Common myeloid progenitor, CD34-positive (primary cell): ENCODE measurements at regions of chr18 and their contacts with region 1.

Region 1: DNA sequence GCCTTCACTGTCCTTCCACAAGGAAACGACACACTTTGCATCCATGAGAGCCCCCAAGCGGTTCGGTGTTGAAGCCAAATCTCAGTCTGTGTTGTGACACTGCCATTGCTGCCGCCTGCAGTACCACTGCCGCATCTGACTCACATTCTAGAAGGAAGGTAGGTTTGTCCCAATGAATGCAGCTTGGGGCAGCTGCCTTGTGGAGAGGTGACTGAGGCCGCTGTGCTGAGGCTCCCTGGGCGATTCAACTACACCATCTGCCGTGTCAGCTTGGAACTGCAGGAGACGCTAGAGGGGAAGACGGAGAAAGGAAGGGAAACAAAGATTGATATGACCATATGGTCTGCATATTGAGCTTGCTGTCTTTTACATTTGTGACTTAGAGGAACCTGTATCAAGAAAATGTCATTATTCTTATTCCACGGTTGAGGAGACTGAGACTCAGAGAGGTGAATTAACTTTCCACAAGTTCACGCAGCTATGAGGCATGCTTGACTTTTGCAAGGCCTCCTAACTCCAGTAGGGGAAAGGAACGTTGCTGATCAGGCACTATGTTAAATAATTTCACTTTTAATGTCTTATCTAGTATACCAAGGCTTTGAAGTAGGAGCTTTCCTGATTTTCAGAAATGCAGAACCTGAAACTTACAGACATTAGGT is 43.5 kb upstream of the LMAN1 start:
- DNase-seq: peak; percentile 84 to 94 (median 93)
- H3K4me3 ChIP-seq: no peak overlapping the region
- H3K27ac ChIP-seq: no peak overlapping the region
- H3K4me1 ChIP-seq: no peaks in the 10 kb centered on the region
- H3K27me3 ChIP-seq: peaks cover 0 to 8% (median 0%) of the 10 kb centered on the region in 5 experiments

Region 2: DNA sequence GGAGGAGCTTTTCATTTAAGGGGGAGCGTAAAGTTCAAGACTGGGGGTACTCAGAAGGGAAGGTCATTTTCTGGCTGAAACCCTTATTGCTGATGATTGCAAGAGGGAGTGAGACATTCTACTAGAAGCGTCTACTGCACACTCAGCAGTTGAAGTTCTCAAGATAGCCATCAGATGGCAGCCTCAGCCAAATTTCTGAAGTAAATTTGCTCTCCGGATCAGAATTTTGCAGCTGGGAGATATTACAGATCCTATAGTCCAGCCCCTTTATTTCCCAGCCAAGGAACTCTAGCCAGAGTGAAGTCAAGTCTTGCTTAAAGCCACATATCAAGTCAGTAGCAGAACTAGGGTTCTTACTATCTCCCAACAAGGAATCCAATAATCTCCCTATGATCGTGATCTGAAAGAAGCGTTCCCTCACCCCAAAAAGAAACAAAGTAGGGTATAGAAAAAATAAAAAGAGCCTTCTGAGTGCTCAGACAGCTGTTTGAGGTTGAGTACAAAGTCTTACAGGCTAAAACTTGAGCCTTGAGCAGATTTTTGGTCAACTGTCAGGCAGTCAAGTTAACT is 153.3 kb before region 1 on chr18:
- CTCF ChIA-PET with region 1: interaction called, 63 read pairs
- POLR2A ChIA-PET with region 1: no interaction called
- DNase-seq: peak; percentile 66 to 80 (median 73)
- H3K4me3 ChIP-seq: no peak overlapping the region
- H3K27ac ChIP-seq: no peak overlapping the region
- H3K4me1 ChIP-seq: no peaks in the 10 kb centered on the region
- H3K27me3 ChIP-seq: peaks cover 9 to 30% (median 17%) of the 10 kb centered on the region in 5 experiments

Region 3: DNA sequence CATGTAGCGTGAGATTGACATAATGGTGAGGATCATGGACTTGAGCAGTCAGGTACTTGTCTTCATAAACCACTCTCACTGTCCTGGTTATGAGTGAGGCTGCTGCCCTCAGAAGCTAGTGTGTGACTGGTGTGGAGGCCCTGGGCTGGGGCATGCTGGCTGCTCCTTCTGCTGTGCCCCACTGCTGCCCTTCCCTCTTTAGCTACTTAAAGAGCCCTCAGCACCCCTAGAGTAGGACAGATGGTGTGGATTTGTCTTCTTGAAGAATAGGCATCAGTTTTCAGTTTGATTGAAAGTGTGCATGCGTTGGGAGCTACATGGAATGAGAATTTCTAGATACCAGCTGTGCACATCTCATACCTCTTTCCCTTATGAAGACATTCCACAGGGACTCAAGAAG is 99.6 kb before region 1 on chr18:
- CTCF ChIA-PET with region 1: interaction called, 50 read pairs
- POLR2A ChIA-PET with region 1: no interaction called
- DNase-seq: no peak
- H3K4me3 ChIP-seq: no peak overlapping the region
- H3K27ac ChIP-seq: no peak overlapping the region
- H3K4me1 ChIP-seq: peaks cover 0 to under 1% (median under 1%) of the 10 kb centered on the region in 4 experiments
- H3K27me3 ChIP-seq: peaks cover 2 to 23% (median 17%) of the 10 kb centered on the region in 5 experiments

Region 4: DNA sequence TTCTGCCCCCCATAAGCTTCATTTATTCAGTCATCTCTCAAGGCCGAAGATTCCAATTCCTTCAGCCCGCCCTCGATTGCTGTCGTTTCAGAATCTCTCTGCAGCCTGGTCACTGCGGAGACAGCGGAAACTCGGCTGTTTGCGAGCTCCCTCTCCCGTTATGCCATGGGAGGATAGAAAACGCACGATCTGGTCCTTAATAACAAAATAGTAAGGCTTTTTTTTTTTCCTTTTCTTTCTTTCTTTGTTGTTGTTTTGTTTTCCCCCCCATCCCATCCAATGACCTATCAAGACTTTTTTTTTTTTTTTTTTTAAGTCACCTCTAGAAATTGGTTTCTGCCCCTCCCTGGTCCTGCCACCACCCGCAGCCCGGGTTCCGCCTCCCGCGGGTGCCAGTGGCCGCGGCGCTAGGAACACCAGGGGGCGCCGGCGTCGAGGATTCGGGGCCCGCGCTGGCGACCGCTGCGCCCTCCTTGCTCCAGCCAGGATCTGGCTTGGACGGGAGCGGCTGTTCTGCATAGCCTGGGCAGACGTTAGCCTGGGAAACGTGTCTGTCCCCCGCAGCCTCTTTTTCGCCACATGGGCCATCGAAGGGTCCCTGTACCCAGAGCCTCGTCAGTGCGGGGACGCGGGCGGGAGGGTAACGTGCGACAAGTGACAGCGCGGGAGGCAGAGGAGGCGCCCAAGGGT is 94.2 kb before region 1 on chr18:
- CTCF ChIA-PET with region 1: interaction called, 50 read pairs
- POLR2A ChIA-PET with region 1: no interaction called
- DNase-seq: peak; percentile 42 to 82 (median 73)
- H3K4me3 ChIP-seq: peak overlapping the region in 3 of 7 experiments; percentile 35 to 70 (median 56)
- H3K27ac ChIP-seq: no peak overlapping the region
- H3K4me1 ChIP-seq: peaks cover 0 to 9% (median 5%) of the 10 kb centered on the region in 4 experiments
- H3K27me3 ChIP-seq: peaks cover 8 to 49% (median 23%) of the 10 kb centered on the region in 5 experiments

Region 5: DNA sequence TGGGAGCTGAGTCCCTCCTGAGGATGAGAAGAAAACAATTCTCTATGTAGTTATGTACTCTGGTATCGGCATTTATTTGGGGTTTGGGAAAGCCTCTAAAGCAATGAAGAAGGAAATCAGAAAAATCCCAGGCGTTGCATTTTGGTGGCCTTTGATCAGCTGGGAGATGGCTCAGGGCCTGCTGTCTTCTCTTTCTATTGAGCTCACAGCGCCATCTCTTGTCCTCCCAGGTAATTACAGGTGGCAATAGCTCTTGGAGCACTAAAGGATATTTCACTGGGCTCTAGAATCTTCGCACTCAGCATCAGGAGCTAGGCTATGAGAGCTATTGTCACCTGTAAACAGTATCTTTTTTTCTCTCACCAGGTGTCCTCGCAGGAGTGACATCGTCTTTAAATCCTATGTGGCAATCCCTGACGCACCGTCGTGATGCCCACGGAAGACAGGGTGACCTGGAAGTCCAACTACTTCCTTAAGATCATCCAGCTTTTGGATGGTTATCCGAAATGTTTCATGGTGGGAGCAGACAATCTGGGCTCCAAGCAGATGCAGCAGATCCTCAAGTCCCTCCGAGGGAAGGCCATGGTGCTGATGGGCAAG is 421.1 kb after region 1 on chr18:
- CTCF ChIA-PET with region 1: no interaction called
- POLR2A ChIA-PET with region 1: no interaction called
- DNase-seq: peak; percentile 48 to 65 (median 59)
- H3K4me3 ChIP-seq: no peak overlapping the region
- H3K27ac ChIP-seq: no peak overlapping the region
- H3K4me1 ChIP-seq: no peaks in the 10 kb centered on the region
- H3K27me3 ChIP-seq: peaks cover 0 to 2% (median 0%) of the 10 kb centered on the region in 5 experiments